ENCODE measurements at regions of chr2 and their contacts with region 1.

Region 1: DNA sequence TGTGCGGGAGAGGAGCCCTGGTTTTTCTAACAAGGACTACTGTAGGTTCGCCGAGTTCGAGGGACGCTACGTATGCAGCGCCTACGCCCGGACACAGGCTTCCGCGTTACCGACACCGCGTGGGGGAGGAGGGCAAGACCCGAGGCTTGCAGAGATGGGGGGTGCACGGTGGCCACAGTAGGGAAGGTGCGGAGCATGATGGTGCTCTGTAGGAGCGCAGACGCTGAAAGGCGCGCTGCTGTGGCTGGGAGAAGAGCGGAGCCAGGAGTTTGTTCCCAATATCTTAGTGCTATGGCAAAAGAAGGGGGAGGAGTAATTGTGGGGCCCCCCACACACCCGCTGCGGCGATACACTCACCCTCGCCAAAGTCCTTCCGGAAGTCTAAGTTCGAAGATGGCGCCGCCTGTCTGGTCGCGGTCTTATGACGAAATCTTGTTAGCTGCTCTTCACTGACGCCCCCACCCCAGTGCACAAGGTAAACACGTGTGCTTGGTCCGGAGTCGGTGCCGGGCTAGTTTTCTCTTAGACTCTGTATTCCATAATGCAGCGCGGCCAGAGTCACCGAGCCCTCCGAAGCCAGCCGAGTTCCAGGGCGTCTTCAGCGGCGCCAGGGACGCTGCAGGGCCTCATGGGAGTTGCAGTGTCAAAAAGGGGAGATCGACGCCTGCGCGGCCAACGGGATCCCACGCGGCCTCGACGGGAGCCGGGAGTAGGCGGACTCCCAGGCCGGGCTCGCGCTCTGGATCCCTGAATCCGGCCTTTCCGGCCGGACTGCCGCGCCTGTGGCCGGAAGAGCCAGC is at the start of gene GTF3C2:
- DNase-seq: peak; percentile 95 to 97
- ATAC-seq: peak; percentile 98
- H3K4me3 ChIP-seq: peak within 1 kb of the TSS; percentile 63 to 80
- H3K27ac ChIP-seq: peak within 1 kb of the TSS in 1 of 2 donors; percentile 55
- H3K4me1 ChIP-seq: no peaks in the 10 kb centered on the region
- H3K27me3 ChIP-seq: no peaks in the 10 kb centered on the region
- total RNA-seq, gene GTF3C2: 42.7 to 60.9 TPM

Region 2: GRCh38 chr2:27102329-27102728 is 254.3 kb before region 1 on chr2:
- intact Hi-C with region 1: no loop called
- DNase-seq: no peak
- ATAC-seq: no peak
- H3K4me3 ChIP-seq: no peak overlapping the region
- H3K27ac ChIP-seq: no peak overlapping the region
- H3K4me1 ChIP-seq: no peaks in the 10 kb centered on the region
- H3K27me3 ChIP-seq: no peaks in the 10 kb centered on the region

Region 3: DNA sequence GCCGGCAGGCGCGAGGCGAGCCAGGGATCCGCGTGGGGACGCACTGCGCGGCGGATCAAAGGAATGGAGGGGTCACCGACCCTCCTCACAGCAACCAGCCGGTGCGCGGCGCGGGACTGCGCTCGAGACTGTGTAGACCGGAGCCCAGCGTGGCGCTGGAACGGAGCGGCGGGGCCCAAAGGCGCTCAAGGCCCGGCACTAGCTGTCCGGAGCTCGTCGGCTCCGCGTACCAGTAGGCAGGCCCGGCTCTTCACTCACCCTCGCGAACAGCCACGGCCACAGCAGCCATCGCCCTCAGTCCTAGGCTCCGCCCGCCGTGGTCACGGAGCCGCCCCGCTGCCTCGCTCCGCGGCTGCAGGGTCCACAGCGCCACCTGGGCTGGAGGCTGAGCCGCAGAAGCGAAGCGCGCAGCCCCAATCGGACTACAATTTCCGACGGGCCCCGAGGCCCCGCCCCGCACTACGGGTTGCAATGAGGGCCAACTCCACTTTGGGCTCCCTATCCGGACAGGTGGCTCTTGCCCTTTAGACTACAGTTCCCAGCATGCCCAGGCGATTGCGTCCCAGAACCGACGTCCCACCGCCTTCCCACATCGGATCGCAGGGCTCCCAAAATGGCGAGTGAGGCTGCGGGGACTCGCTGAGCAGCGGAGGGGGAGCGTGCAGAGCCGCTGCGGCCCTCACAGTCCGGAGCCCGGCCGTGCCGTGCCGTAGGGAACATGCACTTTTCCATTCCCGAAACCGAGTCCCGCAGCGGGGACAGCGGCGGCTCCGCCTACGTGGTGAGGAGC is 13.6 kb after region 1 on chr2 and contains the starts of genes EIF2B4 and SNX17:
- intact Hi-C with region 1: loop called in 1 of 2 experiments (anchors 2 kb)
- DNase-seq: peak; percentile 100
- ATAC-seq: peak; percentile 99
- H3K4me3 ChIP-seq: peak within 1 kb of the TSS; percentile 69 to 82
- H3K27ac ChIP-seq: peak within 1 kb of the TSS in 1 of 2 donors; percentile 90
- H3K4me1 ChIP-seq: no peaks in the 10 kb centered on the region
- H3K27me3 ChIP-seq: no peaks in the 10 kb centered on the region
- total RNA-seq, gene EIF2B4: 32.2 to 42.7 TPM
- total RNA-seq, gene SNX17: 77.8 to 90.5 TPM